MCF 10A (cell line): ENCODE measurements at regions of chr2 and their contacts with region 1.

Region 1: DNA sequence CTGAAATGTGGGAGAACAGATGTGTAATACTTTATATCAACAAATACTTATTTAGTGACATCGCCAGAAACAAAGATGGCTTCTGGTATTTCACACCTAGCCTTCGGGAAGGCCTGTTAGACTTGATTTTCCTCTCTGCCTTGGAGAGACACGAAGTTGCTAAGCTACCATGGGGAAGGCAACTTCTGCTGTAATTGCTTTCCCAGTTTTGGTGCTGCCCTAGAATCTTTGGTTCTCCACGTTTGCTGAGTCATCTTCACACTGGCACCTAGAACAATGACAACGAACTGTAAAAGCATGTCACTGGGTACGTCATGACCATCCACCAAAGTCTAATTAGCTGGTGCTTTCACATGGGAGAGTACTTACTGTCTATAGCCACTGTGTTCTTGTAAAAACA is 58.7 kb upstream of the ACTR3 start:
- DNase-seq: peak; percentile 48
- H3K4me3 Mint-ChIP-seq: no peak overlapping the region
- H3K27ac Mint-ChIP-seq: no peak overlapping the region
- H3K4me1 Mint-ChIP-seq: no peaks in the 10 kb centered on the region
- H3K27me3 Mint-ChIP-seq: no peaks in the 10 kb centered on the region
- CTCF ChIP-seq: no peak

Region 2: DNA sequence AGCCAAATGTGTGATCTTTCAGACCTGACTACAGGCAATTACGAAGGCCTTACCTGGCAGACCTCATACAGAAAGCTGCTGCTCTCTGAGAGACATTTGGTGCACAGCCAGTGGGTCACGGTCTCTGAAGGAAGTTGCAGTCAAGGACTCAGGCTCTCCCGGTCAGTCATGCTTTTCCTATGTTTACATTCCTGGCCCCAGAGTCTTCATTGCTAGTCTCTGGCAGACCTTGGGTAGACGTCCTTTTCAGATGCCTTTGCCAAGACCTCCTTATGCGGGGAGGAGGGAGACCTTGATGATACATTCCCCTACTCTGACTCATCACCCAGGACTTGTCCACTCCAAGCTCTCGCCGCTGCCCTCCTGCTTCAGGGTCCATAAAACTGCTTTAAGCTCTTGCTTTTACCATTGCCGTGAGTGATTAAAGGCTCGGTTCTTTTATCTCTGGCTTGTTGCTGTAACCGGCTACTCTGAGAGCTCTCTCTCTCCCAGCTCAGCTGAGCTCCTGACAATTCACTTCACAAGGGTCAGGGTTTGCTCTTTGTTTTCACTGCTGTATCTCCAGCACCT is 12.7 kb before region 1 on chr2:
- CTCF ChIA-PET with region 1: interaction called, 3 read pairs
- POLR2A ChIA-PET with region 1: interaction called, 11 read pairs
- intact Hi-C with region 1: no loop called
- DNase-seq: peak; percentile 93
- H3K4me3 Mint-ChIP-seq: peak overlapping the region; percentile 45
- H3K27ac Mint-ChIP-seq: peak overlapping the region; percentile 17
- H3K4me1 Mint-ChIP-seq: peaks cover 14% of the 10 kb centered on the region
- H3K27me3 Mint-ChIP-seq: no peaks in the 10 kb centered on the region
- CTCF ChIP-seq: no peak